ENCODE measurements at regions of chr4 and their contacts with region 1.

Region 1: GRCh38 chr4:119628308-119629141 is at the start of gene PDE5A:
- H3K4me3 Mint-ChIP-seq: peak within 1 kb of the TSS; percentile 89
- H3K27ac Mint-ChIP-seq: no peak within 1 kb of the TSS
- H3K4me1 Mint-ChIP-seq: peaks cover 25% of the 10 kb centered on the region
- H3K27me3 Mint-ChIP-seq: peaks cover 61% of the 10 kb centered on the region

Region 2: DNA sequence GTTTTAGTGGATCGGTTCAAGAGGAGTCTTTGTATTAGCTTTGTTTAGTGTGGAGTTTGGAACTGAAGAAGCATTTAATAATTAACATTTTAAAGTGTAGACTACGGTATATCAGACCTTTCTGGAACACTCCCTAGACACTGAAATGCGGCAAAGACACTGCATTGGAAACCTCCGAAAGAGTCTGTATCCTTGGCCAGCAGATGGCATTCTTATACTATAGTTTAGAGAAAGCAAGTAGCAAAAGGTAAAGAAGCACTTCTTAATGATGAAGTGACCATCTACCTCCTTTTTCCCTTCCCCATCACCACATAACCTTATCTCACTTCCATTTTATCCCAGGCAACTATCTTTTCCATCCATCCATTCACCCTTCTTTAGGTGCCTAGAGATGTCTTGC is 314.2 kb before region 1 on chr4:
- intact Hi-C with region 1: loop called (anchors 5 kb)
- H3K4me3 Mint-ChIP-seq: no peak overlapping the region
- H3K27ac Mint-ChIP-seq: no peak overlapping the region
- H3K4me1 Mint-ChIP-seq: peaks cover 5% of the 10 kb centered on the region
- H3K27me3 Mint-ChIP-seq: no peaks in the 10 kb centered on the region

Region 3: GRCh38 chr4:119559044-119559647 is 69.4 kb before region 1 on chr4:
- intact Hi-C with region 1: loop called (anchors 5 kb)
- H3K4me3 Mint-ChIP-seq: no peak overlapping the region
- H3K27ac Mint-ChIP-seq: no peak overlapping the region
- H3K4me1 Mint-ChIP-seq: no peaks in the 10 kb centered on the region
- H3K27me3 Mint-ChIP-seq: no peaks in the 10 kb centered on the region

Measured in dendritic cell treated with granulocyte-macrophage colony-stimulating factor and Interleukin-4, amounts not matched to agents 40 ng/mL and 50 ng/mL, for 4 days (primary cell).